ENCODE measurements at regions of chrX and their contacts with region 1.

Region 1: DNA sequence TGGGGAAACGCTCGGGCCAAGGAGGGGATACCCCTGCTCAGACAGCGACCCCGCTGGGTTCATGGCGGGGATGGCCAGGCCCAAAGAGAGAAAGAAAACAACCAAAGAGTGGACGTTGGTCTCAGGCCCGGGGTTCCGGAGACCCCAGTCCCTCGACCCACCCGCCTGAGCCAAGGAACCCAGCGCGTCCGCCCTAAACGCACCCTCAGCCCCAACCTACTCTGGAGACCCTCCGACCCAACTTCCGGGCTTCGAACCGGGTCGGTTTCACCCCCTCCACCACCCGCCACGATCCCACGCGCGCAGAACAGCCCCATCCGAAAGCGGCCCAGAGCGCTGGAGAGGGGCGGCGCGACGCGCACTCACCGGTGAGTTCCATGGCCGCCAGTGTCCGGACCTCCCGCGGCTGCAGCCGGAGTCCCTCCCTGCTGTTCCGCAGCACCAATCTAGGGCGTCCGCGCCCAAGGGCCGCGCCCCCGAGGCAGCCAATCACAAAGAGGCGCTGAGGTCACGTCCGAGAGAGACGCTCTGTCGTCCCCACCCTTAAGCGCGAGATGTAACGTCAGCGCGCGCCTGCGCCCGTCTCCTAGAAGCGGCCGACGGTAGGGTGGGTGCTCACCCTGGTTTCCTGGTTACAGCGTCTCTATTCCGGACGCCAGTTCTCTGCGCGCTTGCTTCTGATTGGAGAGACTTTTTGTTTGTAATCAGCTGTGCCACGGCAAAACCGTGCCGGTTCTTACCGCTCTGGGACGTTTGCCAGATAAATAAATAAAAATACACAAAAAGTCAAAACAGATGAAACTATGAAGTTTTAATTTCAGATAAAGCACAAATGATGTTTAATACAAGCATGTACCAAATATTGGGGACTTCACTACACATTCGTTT is at the start of gene PIGA:
- DNase-seq: peak; percentile 71 to 95 (median 91)
- ATAC-seq: peak; percentile 92
- H3K4me3 ChIP-seq: peak within 1 kb of the TSS; percentile 92
- H3K4me3 Mint-ChIP-seq: peak within 1 kb of the TSS; percentile 87 to 93 (median 90)
- H3K27ac ChIP-seq: peak within 1 kb of the TSS; percentile 84
- H3K27ac Mint-ChIP-seq: peak within 1 kb of the TSS; percentile 75 to 96 (median 93)
- H3K4me1 ChIP-seq: peaks cover 0 to 6% of the 10 kb centered on the region in 2 donors
- H3K4me1 Mint-ChIP-seq: peaks cover 0 to 20% (median 18%) of the 10 kb centered on the region in 7 donors
- H3K27me3 ChIP-seq: no peaks in the 10 kb centered on the region
- H3K27me3 Mint-ChIP-seq: peaks cover 0 to 15% (median 9%) of the 10 kb centered on the region in 5 donors
- total RNA-seq, gene PIGA: 23.8 to 102 (median 27.8) TPM

Region 2: DNA sequence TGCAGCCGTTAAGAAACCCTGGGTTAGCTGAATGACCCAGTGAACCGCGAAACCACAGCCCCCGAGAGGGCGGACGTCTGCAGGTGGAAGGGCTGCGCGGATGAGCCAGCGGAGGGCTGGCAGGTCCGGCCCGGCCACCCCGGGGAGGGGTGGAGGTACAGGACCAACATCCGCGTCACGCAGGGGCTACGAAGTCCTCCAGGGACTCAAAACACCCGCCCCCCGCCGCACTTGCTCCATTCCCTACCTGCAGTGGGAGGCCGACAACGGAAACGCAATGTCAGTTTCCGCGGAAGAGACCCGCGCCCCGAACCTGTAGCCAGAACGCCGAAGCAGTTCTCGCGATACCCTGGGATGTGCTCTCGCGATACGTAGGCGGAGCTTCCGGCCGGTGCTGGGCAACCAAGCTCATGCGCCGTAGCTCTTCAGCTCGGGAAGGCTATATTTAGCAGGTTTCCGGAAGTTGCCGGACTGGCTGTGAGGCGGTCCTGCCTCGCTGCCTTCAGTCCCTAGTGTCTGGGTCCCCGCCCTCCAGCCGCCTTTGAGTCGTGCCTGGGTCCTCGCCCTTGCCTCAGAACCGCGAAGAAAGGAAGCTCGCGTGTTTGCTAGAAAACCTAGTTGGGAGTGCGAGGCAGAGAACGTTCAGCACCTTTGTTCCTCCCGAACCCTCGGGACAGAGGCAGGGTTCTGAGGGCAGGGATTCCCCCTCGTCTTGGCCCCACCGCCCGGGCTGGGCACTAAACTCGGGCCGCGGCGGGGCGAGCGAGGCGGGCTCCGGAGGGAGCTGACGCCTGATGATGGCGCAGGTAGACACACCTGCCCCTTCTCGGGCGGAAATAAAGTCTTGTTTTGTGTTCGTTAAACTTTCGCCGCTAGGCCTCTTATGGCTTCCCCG is 1600.9 kb before region 1 on chrX and contains the starts of genes OFD1 and TRAPPC2:
- CTCF ChIA-PET with region 1: no interaction called
- POLR2A ChIA-PET with region 1: no interaction called
- intact Hi-C with region 1: loop called (anchors 2 to 10 kb)
- DNase-seq: peak; percentile 76 to 92 (median 87)
- ATAC-seq: peak; percentile 94
- H3K4me3 ChIP-seq: peak within 1 kb of the TSS; percentile 85
- H3K4me3 Mint-ChIP-seq: peak within 1 kb of the TSS; percentile 82 to 99 (median 94)
- H3K27ac ChIP-seq: peak within 1 kb of the TSS; percentile 99
- H3K27ac Mint-ChIP-seq: peak within 1 kb of the TSS; percentile 95 to 99 (median 97)
- H3K4me1 ChIP-seq: peaks cover 12 to 20% of the 10 kb centered on the region in 2 donors
- H3K4me1 Mint-ChIP-seq: peaks cover 21 to 66% (median 58%) of the 10 kb centered on the region in 7 donors
- H3K27me3 ChIP-seq: no peaks in the 10 kb centered on the region
- H3K27me3 Mint-ChIP-seq: no peaks in the 10 kb centered on the region
- total RNA-seq, gene OFD1: 30.4 to 142 (median 72.5) TPM
- total RNA-seq, gene TRAPPC2: 20.7 to 31.1 (median 23.5) TPM

Region 3: DNA sequence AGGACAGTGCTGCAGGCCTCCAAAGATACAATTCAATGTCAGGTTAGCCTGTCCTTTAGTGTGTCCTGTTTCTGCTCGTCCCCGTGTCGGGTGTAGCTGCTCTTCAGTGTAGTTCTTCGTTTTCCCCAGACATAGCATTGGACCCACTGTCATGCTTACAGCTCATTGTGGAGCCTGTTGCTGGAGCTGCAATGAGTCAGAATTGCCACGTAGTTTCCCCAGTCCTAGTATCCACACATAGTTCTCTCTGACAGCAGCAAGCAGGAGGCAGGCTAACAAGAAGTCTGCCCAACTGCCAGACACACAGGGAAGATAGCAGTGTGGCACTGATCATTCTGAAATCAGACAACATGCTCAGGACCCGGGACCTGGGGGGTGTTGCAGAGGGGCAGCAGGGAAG is 412.9 kb before region 1 on chrX:
- CTCF ChIA-PET with region 1: no interaction called
- POLR2A ChIA-PET with region 1: no interaction called
- intact Hi-C with region 1: no loop called
- DNase-seq: no peak
- ATAC-seq: no peak
- H3K4me3 ChIP-seq: no peak overlapping the region
- H3K4me3 Mint-ChIP-seq: no peak overlapping the region
- H3K27ac ChIP-seq: no peak overlapping the region
- H3K27ac Mint-ChIP-seq: peak overlapping the region in 1 of 9 donors; percentile 7
- H3K4me1 ChIP-seq: no peaks in the 10 kb centered on the region
- H3K4me1 Mint-ChIP-seq: no peaks in the 10 kb centered on the region
- H3K27me3 ChIP-seq: no peaks in the 10 kb centered on the region
- H3K27me3 Mint-ChIP-seq: no peaks in the 10 kb centered on the region

Region 4: GRCh38 chrX:15073313-15073712 is 262.1 kb before region 1 on chrX:
- CTCF ChIA-PET with region 1: no interaction called
- POLR2A ChIA-PET with region 1: no interaction called
- intact Hi-C with region 1: no loop called
- DNase-seq: no peak
- ATAC-seq: no peak
- H3K4me3 ChIP-seq: no peak overlapping the region
- H3K4me3 Mint-ChIP-seq: no peak overlapping the region
- H3K27ac ChIP-seq: no peak overlapping the region
- H3K27ac Mint-ChIP-seq: no peak overlapping the region
- H3K4me1 ChIP-seq: no peaks in the 10 kb centered on the region
- H3K4me1 Mint-ChIP-seq: peaks cover 0 to 2% (median 0%) of the 10 kb centered on the region in 7 donors
- H3K27me3 ChIP-seq: no peaks in the 10 kb centered on the region
- H3K27me3 Mint-ChIP-seq: peaks cover 0 to 14% (median 4%) of the 10 kb centered on the region in 5 donors

Region 5: DNA sequence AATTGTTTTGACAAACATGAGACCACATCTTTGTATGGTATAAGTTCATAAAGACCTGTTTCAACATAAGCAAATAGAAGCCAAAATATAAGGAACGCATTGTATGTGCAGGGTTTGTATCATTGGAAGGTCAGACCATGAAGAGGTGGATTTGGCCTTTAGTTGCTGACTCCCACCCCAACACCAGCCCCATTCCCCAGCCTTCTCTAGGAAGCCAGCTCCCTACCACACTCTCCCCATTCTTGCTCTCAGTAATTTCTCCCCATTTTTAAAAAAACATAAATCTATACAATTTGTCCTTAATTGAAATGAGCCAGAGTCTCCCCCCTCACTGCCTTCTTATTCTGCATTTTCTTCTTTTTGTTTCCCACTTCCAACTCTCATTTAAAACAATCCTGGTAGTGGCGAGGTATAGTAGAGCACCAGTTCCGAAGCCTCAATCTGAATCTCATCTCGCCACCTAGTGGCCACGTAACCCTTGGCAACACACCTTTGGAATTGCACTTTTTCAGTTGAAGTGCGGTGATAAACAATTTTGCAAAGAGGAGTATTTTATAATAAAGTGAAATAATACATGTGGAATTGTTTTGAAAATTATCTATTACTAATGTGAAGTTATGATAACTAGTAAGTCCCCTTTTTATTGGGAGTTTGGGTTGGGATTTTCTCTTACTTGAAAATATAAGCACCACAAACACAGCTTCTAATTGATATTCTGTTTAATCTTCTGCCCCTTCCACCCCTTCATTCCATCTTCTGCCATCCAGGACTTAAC is 192.1 kb before region 1 on chrX:
- CTCF ChIA-PET with region 1: no interaction called
- POLR2A ChIA-PET with region 1: no interaction called
- intact Hi-C with region 1: loop called in 1 of 2 experiments (anchors 10 kb)
- DNase-seq: peak in 7 of 9 donors; percentile 5 to 45 (median 39)
- ATAC-seq: peak; percentile 63
- H3K4me3 ChIP-seq: no peak overlapping the region
- H3K4me3 Mint-ChIP-seq: peak overlapping the region in 9 of 10 donors; percentile 10 to 77 (median 58)
- H3K27ac ChIP-seq: no peak overlapping the region
- H3K27ac Mint-ChIP-seq: peak overlapping the region in 6 of 9 donors; percentile 17 to 91 (median 70)
- H3K4me1 ChIP-seq: peaks cover 0 to 5% of the 10 kb centered on the region in 2 donors
- H3K4me1 Mint-ChIP-seq: peaks cover 4 to 23% (median 17%) of the 10 kb centered on the region in 7 donors
- H3K27me3 ChIP-seq: no peaks in the 10 kb centered on the region
- H3K27me3 Mint-ChIP-seq: peaks cover 0 to 3% (median 0%) of the 10 kb centered on the region in 5 donors

Region 6: DNA sequence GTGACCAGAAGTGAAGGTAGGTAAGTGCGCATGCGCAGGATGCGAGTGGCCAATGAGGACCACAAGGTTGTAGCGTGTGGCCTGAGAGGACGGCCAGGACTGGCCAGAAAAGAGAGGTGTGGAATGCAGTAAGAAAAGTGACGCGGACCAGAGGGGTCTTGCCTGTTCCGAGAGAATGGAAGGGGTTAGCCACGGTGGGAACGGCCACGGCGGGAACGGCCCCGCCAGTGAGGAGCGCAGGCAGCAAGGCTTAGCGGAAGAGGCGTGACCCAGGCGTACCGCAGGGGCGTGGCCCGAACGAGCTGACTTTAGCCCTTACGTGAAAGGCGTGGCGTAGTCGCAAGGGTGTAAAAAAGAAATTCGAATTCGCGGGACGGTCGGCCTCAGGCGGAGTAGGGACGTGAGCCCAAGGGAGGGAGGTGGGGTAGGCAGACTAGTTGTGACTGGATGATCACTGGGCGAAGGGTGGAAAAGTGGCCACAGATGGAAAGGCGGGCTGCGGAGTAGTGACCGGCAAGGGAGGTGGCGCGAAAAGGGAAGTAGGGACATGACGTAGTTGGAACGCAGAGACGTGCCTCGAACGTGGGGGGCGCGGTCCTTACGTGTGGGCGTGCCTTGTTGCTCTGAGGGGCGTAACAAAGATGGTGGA is 339.6 kb after region 1 on chrX:
- CTCF ChIA-PET with region 1: no interaction called
- POLR2A ChIA-PET with region 1: no interaction called
- intact Hi-C with region 1: loop called (anchors 1 kb)
- DNase-seq: peak; percentile 70 to 99 (median 96)
- ATAC-seq: peak; percentile 90
- H3K4me3 ChIP-seq: peak overlapping the region; percentile 87
- H3K4me3 Mint-ChIP-seq: no peak overlapping the region
- H3K27ac ChIP-seq: peak overlapping the region; percentile 96
- H3K27ac Mint-ChIP-seq: no peak overlapping the region
- H3K4me1 ChIP-seq: peaks cover 5 to 11% of the 10 kb centered on the region in 2 donors
- H3K4me1 Mint-ChIP-seq: peaks cover 0 to 17% (median 12%) of the 10 kb centered on the region in 7 donors
- H3K27me3 ChIP-seq: no peaks in the 10 kb centered on the region
- H3K27me3 Mint-ChIP-seq: peaks cover 0 to 5% (median 0%) of the 10 kb centered on the region in 5 donors

Region 7: DNA sequence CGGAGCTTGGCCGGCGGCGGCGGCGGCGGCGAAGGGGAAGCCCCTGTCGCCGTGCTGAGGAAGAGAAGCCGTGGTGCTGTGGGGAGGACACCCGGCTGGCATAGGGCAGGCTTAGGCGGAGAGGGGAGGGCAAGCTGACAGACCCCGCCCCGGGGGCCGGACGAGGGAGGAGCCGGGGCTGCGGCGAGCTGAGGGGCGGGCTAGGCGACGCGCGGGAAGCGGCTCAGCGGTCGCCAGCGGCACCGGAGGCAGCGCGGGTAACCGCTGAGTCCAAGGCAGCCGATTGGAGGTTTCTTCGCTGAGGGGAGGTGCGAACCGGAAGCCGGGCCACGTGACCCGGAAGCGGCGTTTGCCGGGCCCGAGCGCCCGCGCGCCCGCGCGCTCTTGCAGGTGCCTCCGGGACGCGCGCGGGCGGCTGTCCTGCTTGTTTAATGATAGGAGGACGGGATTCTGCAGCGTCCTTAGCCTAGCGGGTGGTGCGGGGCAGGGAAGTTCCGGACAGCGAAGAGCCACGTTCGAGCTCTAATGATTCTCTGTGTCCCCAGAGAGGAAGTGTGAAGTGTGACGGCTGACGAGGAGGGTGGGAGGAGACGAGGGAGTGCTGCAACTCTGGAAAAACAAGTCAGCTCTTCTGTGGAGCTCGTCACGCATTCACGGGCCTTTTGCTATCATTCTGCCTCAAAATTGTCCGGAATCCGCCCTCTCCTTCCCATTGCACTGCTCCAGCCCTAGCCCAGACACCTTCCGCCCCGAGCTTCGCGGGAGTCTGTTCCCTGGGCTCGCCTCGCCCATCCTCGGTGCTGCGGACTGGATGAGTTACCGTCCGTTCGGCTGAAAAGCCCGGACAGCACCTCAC is 519.6 kb after region 1 on chrX and contains the start of gene AP1S2:
- CTCF ChIA-PET with region 1: no interaction called
- POLR2A ChIA-PET with region 1: no interaction called
- intact Hi-C with region 1: loop called (anchors 1 kb)
- DNase-seq: peak; percentile 90 to 100 (median 99)
- ATAC-seq: peak; percentile 97
- H3K4me3 ChIP-seq: peak within 1 kb of the TSS; percentile 72
- H3K4me3 Mint-ChIP-seq: peak within 1 kb of the TSS; percentile 88 to 99 (median 94)
- H3K27ac ChIP-seq: peak within 1 kb of the TSS; percentile 87
- H3K27ac Mint-ChIP-seq: peak within 1 kb of the TSS; percentile 96 to 99 (median 98)
- H3K4me1 ChIP-seq: peaks cover 0 to 4% of the 10 kb centered on the region in 2 donors
- H3K4me1 Mint-ChIP-seq: peaks cover 3 to 35% (median 20%) of the 10 kb centered on the region in 7 donors
- H3K27me3 ChIP-seq: no peaks in the 10 kb centered on the region
- H3K27me3 Mint-ChIP-seq: peaks cover 0 to 4% (median 0%) of the 10 kb centered on the region in 5 donors
- total RNA-seq, gene AP1S2: 21.2 to 75.8 (median 25.4) TPM

Region 8: DNA sequence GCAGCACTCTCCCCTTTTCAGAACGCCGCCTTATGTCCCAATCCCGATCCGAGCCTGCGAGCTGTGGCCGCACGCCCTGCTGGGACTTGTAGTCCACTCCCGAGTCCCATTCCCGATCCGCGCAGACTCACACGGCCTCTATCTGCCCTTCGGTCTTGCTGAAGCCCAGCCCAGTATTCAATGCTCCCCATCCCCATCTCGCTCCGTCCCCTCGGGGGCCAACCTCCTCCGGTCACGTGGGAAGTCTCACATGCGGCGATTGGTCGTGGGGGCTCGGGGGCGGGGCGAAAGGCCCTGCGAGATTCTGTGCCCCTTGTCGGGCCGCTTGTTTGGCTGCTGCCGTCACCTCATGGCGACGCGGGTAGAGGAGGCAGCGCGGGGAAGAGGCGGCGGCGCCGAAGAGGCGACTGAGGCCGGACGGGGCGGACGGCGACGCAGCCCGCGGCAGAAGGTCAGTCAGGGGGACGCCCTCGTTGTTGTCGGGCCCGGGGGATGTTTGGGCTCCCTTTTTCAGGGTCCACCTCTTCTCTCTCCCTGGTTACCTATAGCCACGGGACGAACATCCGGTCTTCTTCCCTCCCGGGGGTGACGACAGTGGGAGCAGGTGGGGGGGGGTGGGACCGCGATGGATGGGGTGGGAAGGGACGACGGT is 1450.9 kb after region 1 on chrX and contains the start of gene TXLNG:
- CTCF ChIA-PET with region 1: no interaction called
- POLR2A ChIA-PET with region 1: no interaction called
- intact Hi-C with region 1: loop called (anchors 1 to 2 kb)
- DNase-seq: peak; percentile 81 to 98 (median 97)
- ATAC-seq: peak; percentile 97
- H3K4me3 ChIP-seq: peak within 1 kb of the TSS; percentile 94
- H3K4me3 Mint-ChIP-seq: peak within 1 kb of the TSS; percentile 95 to 99 (median 97)
- H3K27ac ChIP-seq: peak within 1 kb of the TSS; percentile 88
- H3K27ac Mint-ChIP-seq: peak within 1 kb of the TSS; percentile 78 to 94 (median 90)
- H3K4me1 ChIP-seq: peaks cover 0 to 3% of the 10 kb centered on the region in 2 donors
- H3K4me1 Mint-ChIP-seq: peaks cover 4 to 42% (median 12%) of the 10 kb centered on the region in 7 donors
- H3K27me3 ChIP-seq: no peaks in the 10 kb centered on the region
- H3K27me3 Mint-ChIP-seq: no peaks in the 10 kb centered on the region
- total RNA-seq, gene TXLNG: 11.9 to 23.1 (median 17.3) TPM